GM12878 (cell line): ENCODE measurements at regions of chr18 and their contacts with region 1.

Region 1: GRCh38 chr18:23237524-23238151 is 102.4 kb downstream of the CABLES1 start:
- DNase-seq: peak; percentile 81
- ATAC-seq: peak; percentile 86
- H3K4me3 ChIP-seq: no peak overlapping the region
- H3K27ac ChIP-seq: peak overlapping the region; percentile 76
- H3K4me1 ChIP-seq: peaks cover 50% of the 10 kb centered on the region
- H3K27me3 ChIP-seq: no peaks in the 10 kb centered on the region
- CTCF ChIP-seq: peak; percentile 21 to 55 (median 45); a peak in 4 of 6 replicates
- EP300 ChIP-seq: peak; percentile 56 to 87; a peak in 3 of 4 replicates
- POLR2A ChIP-seq: no peak
- RAD21 ChIP-seq: peak; percentile 63

Region 2: GRCh38 chr18:23259701-23260582 is 22.3 kb after region 1 on chr18:
- CTCF ChIA-PET with region 1: interaction called, 6 read pairs
- POLR2A ChIA-PET with region 1: interaction called, 4 read pairs
- RAD21 ChIA-PET with region 1: interaction called, 23 read pairs
- SMC1A ChIA-PET with region 1: interaction called, 15 read pairs
- in situ Hi-C with region 1: no loop called
- intact Hi-C with region 1: no loop called
- DNase-seq: no peak
- ATAC-seq: peak; percentile 82
- H3K4me3 ChIP-seq: peak overlapping the region; percentile 28; the same call in 1 of the 2 replicates
- H3K27ac ChIP-seq: peak overlapping the region; percentile 77
- H3K4me1 ChIP-seq: peaks cover 22% of the 10 kb centered on the region
- H3K27me3 ChIP-seq: no peaks in the 10 kb centered on the region
- CTCF ChIP-seq: no peak
- EP300 ChIP-seq: peak in 1 of 2 experiments; percentile 50; a peak in 1 of 4 replicates
- POLR2A ChIP-seq: no peak; the same call in none of the 2 replicates
- RAD21 ChIP-seq: no peak

Region 3: DNA sequence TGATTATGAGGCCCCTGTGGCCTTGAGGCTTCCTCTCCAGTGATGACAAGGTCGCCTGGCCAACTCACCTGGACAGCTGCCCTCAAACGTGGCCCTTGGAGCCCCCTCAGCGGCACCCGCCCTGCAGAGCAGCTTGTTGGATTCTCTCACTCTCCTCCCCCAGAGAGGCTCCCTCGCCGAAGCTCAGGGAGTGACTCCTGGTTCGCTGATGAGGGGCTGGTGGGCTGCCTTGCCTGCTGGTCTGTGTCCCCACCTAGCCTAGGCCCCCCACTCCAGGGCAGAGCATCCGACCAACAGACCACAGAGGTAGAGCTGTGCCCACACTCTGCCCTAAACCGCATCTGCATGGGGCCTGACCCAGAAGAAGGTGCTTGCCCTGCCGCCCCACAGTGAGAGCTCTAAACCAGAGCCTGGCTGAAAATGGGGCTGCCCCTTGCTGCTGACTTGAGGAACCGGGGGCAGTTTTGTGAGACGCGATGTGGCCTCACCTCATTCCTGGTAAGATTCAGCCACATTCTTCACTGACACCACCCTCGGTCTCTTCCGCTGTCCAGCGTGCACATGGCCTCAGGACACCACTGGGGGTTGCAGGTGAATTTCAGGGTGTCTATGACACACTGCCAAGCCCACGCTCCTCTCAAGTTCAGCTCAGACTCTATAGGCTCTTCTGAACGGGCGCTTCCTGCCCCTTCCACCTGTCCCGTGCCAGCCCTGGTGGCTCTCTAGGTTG is 29.2 kb after region 1 on chr18:
- CTCF ChIA-PET with region 1: interaction called, 13 read pairs
- POLR2A ChIA-PET with region 1: interaction called, 3 read pairs
- RAD21 ChIA-PET with region 1: interaction called, 20 read pairs
- SMC1A ChIA-PET with region 1: interaction called, 12 read pairs
- in situ Hi-C with region 1: no loop called
- intact Hi-C with region 1: no loop called
- DNase-seq: no peak
- ATAC-seq: peak; percentile 83
- H3K4me3 ChIP-seq: no peak overlapping the region
- H3K27ac ChIP-seq: peak overlapping the region; percentile 37; the same call in 1 of the 2 replicates
- H3K4me1 ChIP-seq: peaks cover 14% of the 10 kb centered on the region
- H3K27me3 ChIP-seq: no peaks in the 10 kb centered on the region
- CTCF ChIP-seq: no peak
- EP300 ChIP-seq: peak in 1 of 2 experiments; percentile 11; a peak in 2 of 4 replicates
- POLR2A ChIP-seq: no peak
- RAD21 ChIP-seq: no peak

Region 4: DNA sequence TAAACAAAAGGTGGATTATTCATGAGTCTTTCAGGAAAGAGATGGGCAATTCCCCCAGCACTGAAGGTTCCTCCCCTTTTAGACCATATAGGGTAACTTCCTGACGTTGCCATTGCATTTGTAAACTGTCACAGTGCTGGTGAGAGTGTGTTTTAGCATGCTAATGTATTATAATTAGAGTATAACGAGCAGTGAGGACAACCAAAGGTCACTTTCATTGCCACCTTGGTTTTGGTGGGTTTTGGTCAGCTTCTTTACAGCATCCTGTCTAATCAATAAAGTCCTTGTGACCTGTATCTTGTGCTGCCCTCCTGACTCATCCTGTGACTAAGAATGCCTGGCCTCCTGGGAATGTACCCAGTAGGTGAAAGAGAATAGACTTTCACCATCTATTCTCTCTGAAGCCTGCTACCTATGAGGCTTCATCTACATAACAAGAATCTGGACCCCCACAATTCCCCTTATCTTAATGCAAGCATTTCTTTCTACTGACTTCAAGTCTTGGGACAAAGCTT is 46.3 kb after region 1 on chr18:
- CTCF ChIA-PET with region 1: no interaction called
- POLR2A ChIA-PET with region 1: no interaction called
- RAD21 ChIA-PET with region 1: no interaction called
- SMC1A ChIA-PET with region 1: interaction called, 3 read pairs
- in situ Hi-C with region 1: no loop called
- intact Hi-C with region 1: loop called (anchors 1 kb)
- DNase-seq: peak; percentile 86
- ATAC-seq: peak; percentile 96
- H3K4me3 ChIP-seq: no peak overlapping the region
- H3K27ac ChIP-seq: no peak overlapping the region
- H3K4me1 ChIP-seq: no peaks in the 10 kb centered on the region
- H3K27me3 ChIP-seq: no peaks in the 10 kb centered on the region
- CTCF ChIP-seq: no peak
- EP300 ChIP-seq: peak; percentile 77 to 88; a peak in 3 of 4 replicates
- POLR2A ChIP-seq: no peak
- RAD21 ChIP-seq: no peak